ENCODE measurements at regions of chr16 and their contacts with region 1.

Region 1: GRCh38 chr16:67466581-67466980 is 14.4 kb downstream of the ATP6V0D1 start:
- DNase-seq: no peak
- ATAC-seq: no peak

Region 2: DNA sequence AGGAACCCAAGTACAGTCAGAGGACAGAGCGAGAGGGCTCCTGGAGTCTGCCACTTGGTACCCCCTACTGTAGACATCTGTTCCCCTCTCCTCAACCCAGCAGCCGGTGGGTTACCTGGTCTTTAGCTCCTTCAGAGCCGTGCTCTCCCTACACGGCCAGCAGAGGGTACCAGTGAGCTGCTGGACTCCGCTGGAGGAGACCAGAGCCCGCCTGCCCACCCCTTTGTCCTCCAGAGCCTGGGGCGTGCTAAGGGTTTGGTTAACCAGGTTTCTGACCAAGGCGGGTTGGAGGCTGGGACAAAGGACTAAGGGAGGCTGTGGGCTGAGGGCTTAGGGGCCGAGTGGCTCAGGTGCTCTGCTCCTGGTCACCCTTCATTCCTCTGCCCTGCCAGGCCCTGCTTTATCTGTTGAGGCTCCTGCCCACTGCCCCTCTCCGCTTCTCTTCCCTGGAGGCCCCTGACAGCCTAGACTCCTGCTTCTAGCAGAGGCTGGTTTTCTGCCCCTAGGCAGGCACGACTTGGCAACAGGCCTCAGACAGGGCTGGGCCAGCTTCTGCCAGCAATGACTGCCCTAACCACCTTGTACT is 38.3 kb before region 1 on chr16:
- intact Hi-C with region 1: loop called (anchors 2 kb)
- DNase-seq: peak; percentile 84
- ATAC-seq: peak; percentile 76

Region 3: DNA sequence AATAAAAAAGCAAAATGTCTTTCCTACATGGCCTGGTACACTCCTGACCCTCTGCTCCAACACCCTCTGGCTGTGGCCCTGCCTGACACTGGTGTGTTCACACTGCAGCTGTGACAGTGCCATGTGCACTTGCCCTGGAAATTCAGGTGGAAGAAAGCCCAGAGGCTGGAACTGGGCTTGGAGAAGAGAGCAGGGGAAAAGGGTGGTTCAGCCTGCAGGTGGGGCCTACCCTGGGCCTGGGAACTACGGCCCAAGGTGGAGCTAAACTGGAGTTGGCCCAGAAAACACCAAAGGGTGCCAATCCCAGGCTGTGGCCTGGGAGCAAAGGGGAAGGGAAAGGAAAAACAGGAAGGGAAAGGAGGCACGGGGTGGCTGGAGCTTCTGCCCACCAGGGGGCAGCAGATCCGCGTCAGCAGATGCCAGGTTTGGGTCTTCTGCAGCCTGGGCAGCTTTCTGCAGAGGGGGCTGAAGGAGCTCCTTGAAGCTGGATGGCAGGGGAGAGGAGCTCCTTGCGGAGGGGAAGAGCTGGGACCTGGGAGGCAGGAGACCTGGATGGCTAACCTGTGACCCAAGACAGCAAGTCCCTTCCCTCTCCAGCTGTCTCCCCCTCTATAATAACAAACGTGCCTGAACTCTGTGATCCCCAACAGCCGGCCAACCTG is 80.3 kb after region 1 on chr16:
- intact Hi-C with region 1: no loop called
- DNase-seq: peak; percentile 87
- ATAC-seq: peak; percentile 69